ENCODE measurements at regions of chr4 and their contacts with region 1.

Region 1: DNA sequence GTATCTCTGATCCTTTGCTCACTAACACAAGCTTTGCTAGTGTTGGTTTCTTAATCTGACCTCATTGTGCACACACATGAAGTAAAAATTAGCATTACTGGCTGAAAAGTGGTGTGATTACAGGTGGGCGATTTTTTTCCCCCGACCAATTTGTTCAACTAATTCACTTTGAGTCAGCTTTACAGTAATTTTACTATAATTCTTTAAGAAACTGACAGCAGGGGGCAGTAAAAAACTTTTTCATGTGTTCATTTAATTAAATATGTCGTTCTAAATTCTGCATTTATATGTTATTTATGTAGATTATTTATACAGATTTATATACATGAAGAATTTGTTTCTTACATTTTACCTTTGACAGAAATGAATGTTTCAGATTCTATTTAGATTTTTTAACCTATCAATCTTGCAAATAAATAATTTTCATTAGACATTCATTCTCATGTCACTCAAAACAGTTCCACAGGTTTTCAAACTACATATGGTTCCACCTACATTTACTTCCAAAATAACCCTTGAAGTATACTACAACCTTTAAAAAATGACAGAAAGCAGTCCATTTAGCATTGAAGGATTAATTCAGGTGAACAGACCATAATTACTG is 17.5 kb downstream of the PALLD start:
- DNase-seq: peak in 5 of 9 donors; percentile 16 to 36 (median 25)
- ATAC-seq: no peak
- H3K4me3 ChIP-seq: no peak overlapping the region
- H3K4me3 Mint-ChIP-seq: no peak overlapping the region
- H3K27ac ChIP-seq: no peak overlapping the region
- H3K27ac Mint-ChIP-seq: no peak overlapping the region
- H3K4me1 ChIP-seq: peaks cover 16 to 20% of the 10 kb centered on the region in 2 donors
- H3K4me1 Mint-ChIP-seq: peaks cover 5 to 38% (median 35%) of the 10 kb centered on the region in 7 donors
- H3K27me3 ChIP-seq: no peaks in the 10 kb centered on the region
- H3K27me3 Mint-ChIP-seq: peaks cover 0 to 31% (median 0%) of the 10 kb centered on the region in 5 donors

Region 2: DNA sequence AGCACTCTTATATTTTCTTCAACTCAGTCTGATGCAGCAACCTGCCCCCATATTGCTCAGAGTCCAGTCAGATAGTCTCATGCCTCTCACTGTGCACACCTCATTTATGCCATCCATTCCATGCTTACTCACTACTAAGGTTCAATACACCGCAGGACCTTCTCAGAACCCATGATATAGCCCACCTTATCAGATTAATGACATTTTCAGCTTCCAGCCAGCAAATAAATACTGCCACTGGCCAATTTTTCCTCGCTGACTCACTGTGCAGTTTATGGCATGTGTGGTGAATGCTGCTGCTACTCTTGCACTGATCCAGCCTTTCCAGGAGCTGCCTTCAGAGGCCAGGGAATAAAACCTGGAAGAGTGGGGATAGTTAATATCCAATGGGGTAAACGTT is 899.5 kb before region 1 on chr4:
- CTCF ChIA-PET with region 1: no interaction called
- POLR2A ChIA-PET with region 1: no interaction called
- intact Hi-C with region 1: no loop called
- DNase-seq: no peak
- ATAC-seq: no peak
- H3K4me3 ChIP-seq: no peak overlapping the region
- H3K4me3 Mint-ChIP-seq: no peak overlapping the region
- H3K27ac ChIP-seq: no peak overlapping the region
- H3K27ac Mint-ChIP-seq: no peak overlapping the region
- H3K4me1 ChIP-seq: no peaks in the 10 kb centered on the region
- H3K4me1 Mint-ChIP-seq: peaks cover 0 to 2% (median 0%) of the 10 kb centered on the region in 7 donors
- H3K27me3 ChIP-seq: no peaks in the 10 kb centered on the region
- H3K27me3 Mint-ChIP-seq: no peaks in the 10 kb centered on the region

Region 3: DNA sequence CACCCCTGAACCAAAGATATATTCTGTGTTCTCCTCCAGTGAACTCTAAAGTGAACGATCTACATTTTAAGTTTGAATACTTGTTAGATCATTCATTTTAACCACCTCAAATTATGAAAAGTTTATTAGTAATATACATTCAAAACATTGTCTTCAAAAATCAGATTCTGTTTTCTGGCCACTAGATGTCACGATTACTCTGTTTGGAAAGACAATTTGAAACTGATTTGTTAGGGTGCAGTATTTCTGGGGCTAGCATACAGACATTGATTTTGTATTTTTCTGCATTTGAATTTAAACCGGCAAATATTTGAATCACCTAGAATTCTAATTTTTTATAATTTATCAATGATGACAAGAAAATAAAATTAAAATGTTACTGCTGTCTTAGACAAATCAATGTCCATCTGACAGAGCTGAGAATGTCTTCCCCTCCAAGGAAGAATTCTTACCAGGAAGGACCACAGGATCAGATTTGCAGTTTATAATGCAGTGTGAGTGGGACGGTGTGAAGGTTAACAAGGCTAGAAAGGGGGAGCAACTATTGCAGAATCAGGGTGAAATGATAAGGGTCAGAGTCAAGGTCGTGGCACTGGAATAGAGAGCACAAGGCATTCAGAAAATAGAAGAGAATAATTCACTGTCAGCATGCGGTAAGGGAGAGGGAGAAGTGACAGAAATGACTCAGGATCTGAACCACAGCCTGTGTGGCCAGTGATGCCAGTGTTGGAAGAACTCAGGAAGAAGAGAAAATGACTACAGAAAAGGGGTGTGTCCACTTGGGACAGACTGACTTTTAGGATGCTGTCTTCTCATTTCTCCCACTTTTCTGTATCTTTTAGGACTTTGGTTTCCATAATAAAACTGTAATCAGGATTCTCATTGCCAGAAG is 330.4 kb before region 1 on chr4:
- CTCF ChIA-PET with region 1: no interaction called
- POLR2A ChIA-PET with region 1: no interaction called
- intact Hi-C with region 1: loop called in 1 of 2 experiments (anchors 10 kb)
- DNase-seq: peak in 4 of 9 donors; percentile 1 to 23 (median 8)
- ATAC-seq: no peak
- H3K4me3 ChIP-seq: no peak overlapping the region
- H3K4me3 Mint-ChIP-seq: no peak overlapping the region
- H3K27ac ChIP-seq: no peak overlapping the region
- H3K27ac Mint-ChIP-seq: no peak overlapping the region
- H3K4me1 ChIP-seq: no peaks in the 10 kb centered on the region
- H3K4me1 Mint-ChIP-seq: peaks cover 0 to 6% (median 0%) of the 10 kb centered on the region in 7 donors
- H3K27me3 ChIP-seq: no peaks in the 10 kb centered on the region
- H3K27me3 Mint-ChIP-seq: peaks cover 0 to 6% (median 0%) of the 10 kb centered on the region in 5 donors

Region 4: GRCh38 chr4:168461821-168462220 is 52.5 kb before region 1 on chr4:
- CTCF ChIA-PET with region 1: no interaction called
- POLR2A ChIA-PET with region 1: no interaction called
- intact Hi-C with region 1: loop called in 1 of 2 experiments (anchors 10 kb)
- DNase-seq: no peak
- ATAC-seq: no peak
- H3K4me3 ChIP-seq: no peak overlapping the region
- H3K4me3 Mint-ChIP-seq: no peak overlapping the region
- H3K27ac ChIP-seq: no peak overlapping the region
- H3K27ac Mint-ChIP-seq: no peak overlapping the region
- H3K4me1 ChIP-seq: no peaks in the 10 kb centered on the region
- H3K4me1 Mint-ChIP-seq: peaks cover 0 to 17% (median 2%) of the 10 kb centered on the region in 7 donors
- H3K27me3 ChIP-seq: no peaks in the 10 kb centered on the region
- H3K27me3 Mint-ChIP-seq: no peaks in the 10 kb centered on the region

Region 5: GRCh38 chr4:168501389-168501788 is 13.0 kb before region 1 on chr4:
- CTCF ChIA-PET with region 1: interaction called, 3 read pairs
- POLR2A ChIA-PET with region 1: no interaction called
- intact Hi-C with region 1: loop called in 1 of 2 experiments (anchors 2 kb)
- DNase-seq: no peak
- ATAC-seq: no peak
- H3K4me3 ChIP-seq: no peak overlapping the region
- H3K4me3 Mint-ChIP-seq: no peak overlapping the region
- H3K27ac ChIP-seq: no peak overlapping the region
- H3K27ac Mint-ChIP-seq: no peak overlapping the region
- H3K4me1 ChIP-seq: peaks cover 0 to 7% of the 10 kb centered on the region in 2 donors
- H3K4me1 Mint-ChIP-seq: peaks cover 0 to 19% (median 16%) of the 10 kb centered on the region in 7 donors
- H3K27me3 ChIP-seq: no peaks in the 10 kb centered on the region
- H3K27me3 Mint-ChIP-seq: peaks cover 0 to 33% (median 6%) of the 10 kb centered on the region in 5 donors

Region 6: GRCh38 chr4:168831919-168832762 is 317.8 kb after region 1 on chr4:
- CTCF ChIA-PET with region 1: no interaction called
- POLR2A ChIA-PET with region 1: no interaction called
- intact Hi-C with region 1: loop called in 1 of 2 experiments (anchors 5 kb)
- DNase-seq: peak in 8 of 9 donors; percentile 31 to 77 (median 44)
- ATAC-seq: peak; percentile 85
- H3K4me3 ChIP-seq: peak overlapping the region; percentile 45
- H3K4me3 Mint-ChIP-seq: peak overlapping the region; percentile 63 to 91 (median 84)
- H3K27ac ChIP-seq: no peak overlapping the region
- H3K27ac Mint-ChIP-seq: peak overlapping the region in 1 of 9 donors; percentile 66
- H3K4me1 ChIP-seq: peaks cover 0 to 5% of the 10 kb centered on the region in 2 donors
- H3K4me1 Mint-ChIP-seq: peaks cover 0 to 21% (median 13%) of the 10 kb centered on the region in 7 donors
- H3K27me3 ChIP-seq: peaks cover 0 to 15% of the 10 kb centered on the region in 2 donors
- H3K27me3 Mint-ChIP-seq: peaks cover 46 to 68% (median 60%) of the 10 kb centered on the region in 5 donors

Region 7: GRCh38 chr4:169485791-169486742 is 971.7 kb after region 1 on chr4:
- CTCF ChIA-PET with region 1: no interaction called
- POLR2A ChIA-PET with region 1: no interaction called
- intact Hi-C with region 1: loop called (anchors 1 to 2 kb)
- DNase-seq: peak in 7 of 9 donors; percentile 5 to 46 (median 34)
- ATAC-seq: no peak
- H3K4me3 ChIP-seq: no peak overlapping the region
- H3K4me3 Mint-ChIP-seq: no peak overlapping the region
- H3K27ac ChIP-seq: no peak overlapping the region
- H3K27ac Mint-ChIP-seq: no peak overlapping the region
- H3K4me1 ChIP-seq: no peaks in the 10 kb centered on the region
- H3K4me1 Mint-ChIP-seq: no peaks in the 10 kb centered on the region
- H3K27me3 ChIP-seq: no peaks in the 10 kb centered on the region
- H3K27me3 Mint-ChIP-seq: no peaks in the 10 kb centered on the region

Measured in naive thymus-derived CD4-positive, alpha-beta T cell (primary cell).